Naive thymus-derived CD4-positive, alpha-beta T cell (primary cell): ENCODE measurements at regions of chr13 and their contacts with region 1.

Region 1: DNA sequence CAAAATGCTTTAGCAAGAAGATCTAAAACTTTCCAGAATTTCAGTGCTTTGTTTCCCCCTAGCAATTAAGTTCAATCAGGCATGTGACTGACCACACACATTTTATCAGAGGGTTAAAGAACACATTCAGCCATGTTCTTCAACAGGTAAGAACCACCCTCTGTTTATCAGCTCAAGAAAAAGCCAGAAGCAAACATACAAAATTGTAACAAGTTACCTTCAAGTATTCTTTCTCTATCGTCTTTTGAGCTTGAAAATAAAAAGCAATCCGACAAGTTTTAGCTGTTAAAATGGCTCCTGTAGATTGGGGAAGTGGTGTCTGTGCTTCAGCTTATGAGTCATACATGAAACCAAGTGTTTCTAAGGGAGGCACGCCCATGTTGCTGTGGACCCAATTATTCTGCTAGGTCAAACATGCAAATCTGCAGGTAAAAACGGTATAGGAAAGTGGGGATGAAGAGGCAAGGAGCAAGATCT is at the start of gene ELF1:
- DNase-seq: peak in 8 of 9 donors; percentile 35 to 83 (median 75)
- ATAC-seq: peak; percentile 93
- H3K4me3 ChIP-seq: peak within 1 kb of the TSS; percentile 76
- H3K4me3 Mint-ChIP-seq: peak within 1 kb of the TSS; percentile 79 to 94 (median 90)
- H3K27ac ChIP-seq: peak within 1 kb of the TSS; percentile 93
- H3K27ac Mint-ChIP-seq: peak within 1 kb of the TSS; percentile 90 to 98 (median 96)
- H3K4me1 ChIP-seq: peaks cover 14 to 22% of the 10 kb centered on the region in 2 donors
- H3K4me1 Mint-ChIP-seq: peaks cover 29 to 61% (median 50%) of the 10 kb centered on the region in 7 donors
- H3K27me3 ChIP-seq: no peaks in the 10 kb centered on the region
- H3K27me3 Mint-ChIP-seq: no peaks in the 10 kb centered on the region
- total RNA-seq, gene ELF1: 117 to 193 (median 180) TPM

Region 2: GRCh38 chr13:39159393-39159792 is 1859.7 kb before region 1 on chr13:
- CTCF ChIA-PET with region 1: no interaction called
- POLR2A ChIA-PET with region 1: no interaction called
- intact Hi-C with region 1: no loop called
- DNase-seq: no peak
- ATAC-seq: no peak
- H3K4me3 ChIP-seq: no peak overlapping the region
- H3K4me3 Mint-ChIP-seq: no peak overlapping the region
- H3K27ac ChIP-seq: no peak overlapping the region
- H3K27ac Mint-ChIP-seq: no peak overlapping the region
- H3K4me1 ChIP-seq: no peaks in the 10 kb centered on the region
- H3K4me1 Mint-ChIP-seq: peaks cover 0 to 5% (median 0%) of the 10 kb centered on the region in 7 donors
- H3K27me3 ChIP-seq: peaks cover 0 to 5% of the 10 kb centered on the region in 2 donors
- H3K27me3 Mint-ChIP-seq: peaks cover 14 to 56% (median 43%) of the 10 kb centered on the region in 5 donors

Region 3: GRCh38 chr13:40974460-40975407 is 44.3 kb before region 1 on chr13:
- CTCF ChIA-PET with region 1: interaction called, 5 read pairs
- POLR2A ChIA-PET with region 1: interaction called, 11 read pairs
- intact Hi-C with region 1: loop called (anchors 1 kb)
- DNase-seq: peak in 7 of 9 donors; percentile 43 to 66 (median 52)
- ATAC-seq: peak; percentile 88
- H3K4me3 ChIP-seq: no peak overlapping the region
- H3K4me3 Mint-ChIP-seq: peak overlapping the region; percentile 68 to 94 (median 82)
- H3K27ac ChIP-seq: peak overlapping the region; percentile 86
- H3K27ac Mint-ChIP-seq: peak overlapping the region; percentile 64 to 97 (median 82)
- H3K4me1 ChIP-seq: peaks cover 75 to 80% of the 10 kb centered on the region in 2 donors
- H3K4me1 Mint-ChIP-seq: peaks cover 75 to 99% (median 95%) of the 10 kb centered on the region in 7 donors
- H3K27me3 ChIP-seq: no peaks in the 10 kb centered on the region
- H3K27me3 Mint-ChIP-seq: no peaks in the 10 kb centered on the region

Region 4: GRCh38 chr13:41004875-41005693 is 14.0 kb before region 1 on chr13:
- CTCF ChIA-PET with region 1: interaction called, 5 read pairs
- POLR2A ChIA-PET with region 1: interaction called, 43 read pairs
- intact Hi-C with region 1: loop called (anchors 1 kb)
- DNase-seq: peak in 7 of 9 donors; percentile 52 to 74 (median 65)
- ATAC-seq: peak; percentile 90
- H3K4me3 ChIP-seq: peak overlapping the region; percentile 6
- H3K4me3 Mint-ChIP-seq: peak overlapping the region; percentile 4 to 87 (median 69)
- H3K27ac ChIP-seq: peak overlapping the region; percentile 67
- H3K27ac Mint-ChIP-seq: peak overlapping the region; percentile 58 to 89 (median 88)
- H3K4me1 ChIP-seq: peaks cover 61 to 62% of the 10 kb centered on the region in 2 donors
- H3K4me1 Mint-ChIP-seq: peaks cover 51 to 92% (median 82%) of the 10 kb centered on the region in 7 donors
- H3K27me3 ChIP-seq: no peaks in the 10 kb centered on the region
- H3K27me3 Mint-ChIP-seq: no peaks in the 10 kb centered on the region

Region 5: GRCh38 chr13:41054212-41054877 is 35.3 kb after region 1 on chr13:
- CTCF ChIA-PET with region 1: interaction called, 24 read pairs
- POLR2A ChIA-PET with region 1: interaction called, 71 read pairs
- intact Hi-C with region 1: loop called in 1 of 2 experiments (anchors 1 kb)
- DNase-seq: peak in 7 of 9 donors; percentile 42 to 70 (median 56)
- ATAC-seq: peak; percentile 59
- H3K4me3 ChIP-seq: no peak overlapping the region
- H3K4me3 Mint-ChIP-seq: peak overlapping the region in 7 of 10 donors; percentile 14 to 68 (median 48)
- H3K27ac ChIP-seq: peak overlapping the region; percentile 5
- H3K27ac Mint-ChIP-seq: peak overlapping the region in 7 of 9 donors; percentile 2 to 73 (median 59)
- H3K4me1 ChIP-seq: peaks cover 0 to 12% of the 10 kb centered on the region in 2 donors
- H3K4me1 Mint-ChIP-seq: peaks cover 40 to 64% (median 54%) of the 10 kb centered on the region in 7 donors
- H3K27me3 ChIP-seq: no peaks in the 10 kb centered on the region
- H3K27me3 Mint-ChIP-seq: no peaks in the 10 kb centered on the region

Region 6: DNA sequence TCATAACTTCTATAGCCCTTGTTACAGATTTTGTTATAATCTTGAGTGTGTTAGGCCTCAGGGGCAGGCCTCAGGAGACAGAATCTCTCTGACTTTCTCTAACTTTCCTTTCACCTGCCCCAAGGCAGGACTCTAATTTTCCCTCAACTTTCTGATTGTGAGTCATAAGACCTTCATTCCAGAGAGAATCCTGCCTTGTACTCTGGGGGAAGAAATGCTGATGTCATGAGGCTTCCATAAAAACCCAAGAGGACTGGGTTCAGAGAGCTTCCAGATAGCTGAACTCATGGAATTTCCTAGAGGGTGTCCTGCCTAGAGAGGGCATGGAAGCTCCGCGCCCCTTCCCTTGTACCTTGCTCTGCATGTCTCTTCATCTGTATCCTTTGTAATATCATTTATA is 118.9 kb after region 1 on chr13:
- CTCF ChIA-PET with region 1: no interaction called
- POLR2A ChIA-PET with region 1: no interaction called
- intact Hi-C with region 1: no loop called
- DNase-seq: no peak
- ATAC-seq: no peak
- H3K4me3 ChIP-seq: no peak overlapping the region
- H3K4me3 Mint-ChIP-seq: no peak overlapping the region
- H3K27ac ChIP-seq: no peak overlapping the region
- H3K27ac Mint-ChIP-seq: no peak overlapping the region
- H3K4me1 ChIP-seq: peaks cover 0 to 6% of the 10 kb centered on the region in 2 donors
- H3K4me1 Mint-ChIP-seq: peaks cover 10 to 17% (median 13%) of the 10 kb centered on the region in 7 donors
- H3K27me3 ChIP-seq: no peaks in the 10 kb centered on the region
- H3K27me3 Mint-ChIP-seq: no peaks in the 10 kb centered on the region

Region 7: DNA sequence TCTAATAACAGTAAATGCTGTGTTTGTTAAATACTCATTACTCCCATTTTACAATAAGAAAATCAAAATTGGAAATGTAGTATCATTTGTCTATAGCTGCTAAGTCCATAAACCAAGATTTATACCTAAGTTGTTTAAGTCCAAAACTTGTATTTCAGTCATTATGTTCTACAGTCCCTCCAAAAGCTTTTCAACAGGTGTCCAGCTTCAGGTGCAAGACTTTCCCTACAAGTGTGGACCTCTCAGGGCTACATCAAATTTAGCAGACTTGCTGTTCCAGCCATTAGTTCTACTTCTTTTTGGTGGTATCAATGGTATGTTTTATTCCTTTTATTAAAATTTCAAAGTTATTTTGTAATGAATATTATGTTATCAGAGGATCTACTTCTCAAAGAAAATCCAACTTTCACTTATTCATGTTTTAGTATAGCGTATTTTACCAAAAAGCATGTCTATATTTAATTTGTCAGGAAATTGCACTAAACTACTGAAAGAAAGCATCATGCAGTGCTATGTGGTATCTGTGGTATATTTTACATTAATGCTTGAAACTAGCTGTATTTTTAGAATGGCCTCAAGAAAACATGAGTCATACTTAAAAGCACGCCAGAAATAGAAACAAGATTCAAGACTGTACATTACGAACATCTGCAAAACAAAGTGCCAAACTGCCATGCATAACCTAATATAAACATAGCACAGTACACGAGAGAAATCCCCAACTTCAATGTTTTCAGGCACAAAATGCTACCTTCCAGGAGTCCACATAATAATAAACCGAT is 897.3 kb after region 1 on chr13:
- CTCF ChIA-PET with region 1: no interaction called
- POLR2A ChIA-PET with region 1: no interaction called
- intact Hi-C with region 1: loop called in 1 of 2 experiments (anchors 5 kb)
- DNase-seq: peak in 5 of 9 donors; percentile 15 to 47 (median 30)
- ATAC-seq: peak; percentile 76
- H3K4me3 ChIP-seq: no peak overlapping the region
- H3K4me3 Mint-ChIP-seq: peak overlapping the region in 9 of 10 donors; percentile 26 to 81 (median 57)
- H3K27ac ChIP-seq: no peak overlapping the region
- H3K27ac Mint-ChIP-seq: peak overlapping the region in 7 of 9 donors; percentile 0 to 87 (median 47)
- H3K4me1 ChIP-seq: peaks cover 11 to 15% of the 10 kb centered on the region in 2 donors
- H3K4me1 Mint-ChIP-seq: peaks cover 26 to 65% (median 44%) of the 10 kb centered on the region in 7 donors
- H3K27me3 ChIP-seq: no peaks in the 10 kb centered on the region
- H3K27me3 Mint-ChIP-seq: no peaks in the 10 kb centered on the region